Esophagus squamous epithelium (tissue), 5 donors: ENCODE measurements at regions of chr19 and their contacts with region 1.

Region 1: GRCh38 chr19:12564016-12564664 is 12.9 kb upstream of the ZNF564 start:
- DNase-seq: peak; percentile 48
- H3K4me3 ChIP-seq: no peak overlapping the region
- H3K27ac ChIP-seq: no peak overlapping the region
- H3K4me1 ChIP-seq: peaks cover 0 to 7% (median 0%) of the 10 kb centered on the region in 3 donors
- H3K27me3 ChIP-seq: no peaks in the 10 kb centered on the region
- CTCF ChIP-seq: peak; percentile 77 to 96 (median 94)
- POLR2A ChIP-seq: no peak

Region 2: GRCh38 chr19:12669270-12670158 is 105.4 kb after region 1 on chr19:
- intact Hi-C with region 1: loop called (anchors 5 kb)
- DNase-seq: no peak
- H3K4me3 ChIP-seq: peak overlapping the region; percentile 58 to 95 (median 85)
- H3K27ac ChIP-seq: peak overlapping the region; percentile 85 to 99 (median 96)
- H3K4me1 ChIP-seq: peaks cover 30 to 57% (median 38%) of the 10 kb centered on the region in 3 donors
- H3K27me3 ChIP-seq: no peaks in the 10 kb centered on the region
- CTCF ChIP-seq: peak in 1 of 6 experiments; percentile 26
- POLR2A ChIP-seq: no peak